ENCODE measurements at regions of chr17 and their contacts with region 1.

Region 1: DNA sequence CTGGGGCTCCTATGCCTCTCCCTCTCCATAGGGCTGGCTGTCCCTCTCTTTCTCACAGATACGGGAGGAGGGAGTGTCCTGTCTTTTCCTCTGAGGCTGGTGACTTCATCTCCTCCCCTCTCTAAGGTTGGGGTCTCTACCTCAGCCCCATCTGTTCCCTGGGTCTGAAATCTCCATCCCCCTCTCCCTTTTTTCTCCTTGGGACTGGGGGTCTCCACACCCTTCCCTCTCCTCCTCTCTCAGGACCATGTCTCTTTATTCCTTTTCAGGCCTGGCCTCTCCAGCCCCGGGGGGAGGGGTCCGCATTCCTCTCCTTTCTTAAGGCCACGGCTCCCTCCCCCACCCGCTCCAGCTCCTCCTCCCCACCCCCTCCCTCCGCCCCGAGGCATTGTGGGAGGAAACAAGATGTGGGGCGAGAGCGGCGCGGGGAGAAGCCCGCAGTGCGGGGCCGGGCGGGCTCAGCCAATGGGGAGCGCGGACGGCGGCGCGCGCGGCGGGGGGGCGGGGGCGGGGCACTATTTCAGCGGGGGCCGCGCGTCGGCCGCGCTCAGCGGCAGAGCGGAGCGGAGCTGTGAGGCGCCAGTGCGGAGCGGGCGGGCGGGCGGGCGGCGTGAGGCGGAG is at the start of gene DYNLL2:
- DNase-seq: peak; percentile 86 to 89 (median 88)
- H3K4me3 ChIP-seq: peak within 1 kb of the TSS; percentile 79 to 85
- H3K4me3 Mint-ChIP-seq: peak within 1 kb of the TSS; percentile 91 to 95 (median 94)
- H3K27ac ChIP-seq: peak within 1 kb of the TSS; percentile 80
- H3K27ac Mint-ChIP-seq: peak within 1 kb of the TSS; percentile 91 to 95 (median 93)
- H3K4me1 ChIP-seq: peaks cover 40% of the 10 kb centered on the region
- H3K4me1 Mint-ChIP-seq: peaks cover 20 to 41% (median 35%) of the 10 kb centered on the region in 4 donors
- H3K27me3 ChIP-seq: no peaks in the 10 kb centered on the region
- H3K27me3 Mint-ChIP-seq: peaks cover 0 to 10% of the 10 kb centered on the region in 2 donors
- total RNA-seq, gene DYNLL2: 45.6 to 45.8 TPM

Region 2: DNA sequence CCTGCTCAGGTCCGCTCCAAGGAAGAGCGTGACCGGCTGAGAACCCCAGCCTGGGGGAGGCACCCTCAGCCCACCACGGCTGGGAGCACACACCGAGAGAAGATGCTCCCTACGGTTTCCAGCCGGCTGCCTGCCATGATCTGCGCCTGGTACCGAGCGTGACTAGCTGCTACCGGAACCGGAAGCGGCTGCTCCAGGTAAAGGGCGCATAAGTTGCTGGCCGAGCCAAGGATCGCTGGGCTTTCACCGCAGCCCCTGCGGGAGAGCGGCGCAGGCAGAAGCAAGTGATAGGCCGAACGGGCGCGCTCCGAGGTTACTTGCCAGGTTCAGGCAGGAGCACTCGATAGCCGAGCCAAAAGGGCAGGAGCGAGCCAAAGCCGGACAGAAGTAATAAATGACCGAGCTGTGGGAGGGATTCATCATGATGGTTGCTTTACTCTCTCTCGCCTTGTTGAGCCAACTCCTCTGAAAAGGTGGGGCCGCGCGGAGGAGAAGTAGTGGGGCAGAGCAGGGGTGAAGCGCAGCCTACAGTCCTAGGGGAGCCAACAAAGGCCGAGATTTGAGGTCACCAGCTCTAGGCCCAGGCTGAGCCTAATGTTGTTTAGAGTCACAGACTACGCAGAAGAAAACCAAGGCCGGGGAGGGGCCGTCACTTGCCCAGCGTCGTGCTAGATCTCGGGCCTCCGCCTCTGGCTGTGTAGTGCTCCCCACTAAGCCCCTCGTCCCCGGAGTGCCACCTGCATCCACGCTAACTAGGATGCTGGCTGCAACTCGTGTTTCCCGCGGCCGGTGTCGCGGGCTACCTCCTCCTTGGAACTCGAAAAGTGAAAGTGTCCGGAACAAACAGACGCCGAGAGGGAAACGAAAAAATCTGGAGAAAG is 232.9 kb before region 1 on chr17 and contains the start of gene MRPS23:
- CTCF ChIA-PET with region 1: no interaction called
- POLR2A ChIA-PET with region 1: interaction called, 12 read pairs
- intact Hi-C with region 1: loop called (anchors 1 kb)
- DNase-seq: peak; percentile 94 to 99 (median 97)
- H3K4me3 ChIP-seq: peak within 1 kb of the TSS; percentile 75 to 87
- H3K4me3 Mint-ChIP-seq: peak within 1 kb of the TSS; percentile 96 to 99 (median 98)
- H3K27ac ChIP-seq: peak within 1 kb of the TSS; percentile 92
- H3K27ac Mint-ChIP-seq: peak within 1 kb of the TSS; percentile 98 to 100 (median 99)
- H3K4me1 ChIP-seq: peaks cover 32% of the 10 kb centered on the region
- H3K4me1 Mint-ChIP-seq: peaks cover 27 to 57% (median 35%) of the 10 kb centered on the region in 4 donors
- H3K27me3 ChIP-seq: no peaks in the 10 kb centered on the region
- H3K27me3 Mint-ChIP-seq: no peaks in the 10 kb centered on the region
- total RNA-seq, gene MRPS23: 28.7 to 29.5 TPM

Region 3: GRCh38 chr17:57892146-57892828 is 190.7 kb before region 1 on chr17:
- CTCF ChIA-PET with region 1: no interaction called
- POLR2A ChIA-PET with region 1: no interaction called
- intact Hi-C with region 1: loop called (anchors 10 kb)
- DNase-seq: peak; percentile 62 to 72 (median 66)
- H3K4me3 ChIP-seq: no peak overlapping the region
- H3K4me3 Mint-ChIP-seq: no peak overlapping the region
- H3K27ac ChIP-seq: no peak overlapping the region
- H3K27ac Mint-ChIP-seq: no peak overlapping the region
- H3K4me1 ChIP-seq: no peaks in the 10 kb centered on the region
- H3K4me1 Mint-ChIP-seq: peaks cover 2 to 7% (median 5%) of the 10 kb centered on the region in 4 donors
- H3K27me3 ChIP-seq: no peaks in the 10 kb centered on the region
- H3K27me3 Mint-ChIP-seq: peaks cover 0 to 6% of the 10 kb centered on the region in 2 donors

Region 4: GRCh38 chr17:57975044-57975443 is 107.9 kb before region 1 on chr17:
- CTCF ChIA-PET with region 1: no interaction called
- POLR2A ChIA-PET with region 1: no interaction called
- intact Hi-C with region 1: no loop called
- DNase-seq: no peak
- H3K4me3 ChIP-seq: no peak overlapping the region
- H3K4me3 Mint-ChIP-seq: no peak overlapping the region
- H3K27ac ChIP-seq: no peak overlapping the region
- H3K27ac Mint-ChIP-seq: peak overlapping the region in 1 of 7 donors; percentile 30
- H3K4me1 ChIP-seq: no peaks in the 10 kb centered on the region
- H3K4me1 Mint-ChIP-seq: peaks cover 4 to 9% (median 6%) of the 10 kb centered on the region in 4 donors
- H3K27me3 ChIP-seq: no peaks in the 10 kb centered on the region
- H3K27me3 Mint-ChIP-seq: no peaks in the 10 kb centered on the region

Region 5: DNA sequence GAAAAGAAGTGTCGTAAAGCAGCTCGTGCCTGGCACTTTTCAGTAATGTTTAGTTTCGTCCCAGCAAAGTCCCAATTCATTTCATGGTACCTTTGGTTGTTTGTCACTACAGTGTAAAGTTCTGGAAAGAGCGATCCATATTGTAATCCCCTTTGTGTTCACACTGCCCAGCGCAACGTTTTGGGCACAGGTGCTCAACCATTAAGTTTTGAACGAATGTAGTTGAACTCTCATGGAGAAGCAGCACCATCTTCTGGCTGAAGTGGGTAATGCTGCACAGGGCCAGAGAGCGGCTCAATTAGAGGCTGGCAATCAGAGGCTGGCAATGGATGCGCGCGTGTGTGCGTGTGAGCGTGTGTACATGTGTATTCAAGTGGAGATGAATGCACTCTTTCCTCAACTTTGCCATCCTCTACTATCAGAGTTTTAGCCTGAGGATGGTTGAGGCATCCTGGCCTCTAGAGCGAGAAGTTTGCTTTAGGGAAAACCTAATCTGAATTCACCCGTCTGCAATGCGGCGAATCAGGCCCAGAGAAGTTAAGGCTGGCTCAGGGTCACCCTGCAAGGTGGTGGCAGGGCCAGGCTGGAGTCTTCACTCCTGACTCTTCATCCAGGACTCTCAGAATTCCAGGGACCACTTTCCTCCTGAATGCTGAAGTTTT is 30.1 kb after region 1 on chr17:
- CTCF ChIA-PET with region 1: interaction called, 4 read pairs
- POLR2A ChIA-PET with region 1: no interaction called
- intact Hi-C with region 1: loop called (anchors 1 kb)
- DNase-seq: peak; percentile 77 to 81 (median 79)
- H3K4me3 ChIP-seq: no peak overlapping the region
- H3K4me3 Mint-ChIP-seq: no peak overlapping the region
- H3K27ac ChIP-seq: no peak overlapping the region
- H3K27ac Mint-ChIP-seq: peak overlapping the region in 2 of 7 donors; percentile 14 to 69
- H3K4me1 ChIP-seq: no peaks in the 10 kb centered on the region
- H3K4me1 Mint-ChIP-seq: peaks cover 0 to 4% (median 2%) of the 10 kb centered on the region in 4 donors
- H3K27me3 ChIP-seq: no peaks in the 10 kb centered on the region
- H3K27me3 Mint-ChIP-seq: peaks cover 3 to 8% of the 10 kb centered on the region in 2 donors

Region 6: GRCh38 chr17:58172369-58173071 is 89.5 kb after region 1 on chr17:
- CTCF ChIA-PET with region 1: no interaction called
- POLR2A ChIA-PET with region 1: no interaction called
- intact Hi-C with region 1: loop called (anchors 1 kb)
- DNase-seq: peak; percentile 62 to 72 (median 66)
- H3K4me3 ChIP-seq: no peak overlapping the region
- H3K4me3 Mint-ChIP-seq: peak overlapping the region; percentile 16 to 69 (median 51)
- H3K27ac ChIP-seq: no peak overlapping the region
- H3K27ac Mint-ChIP-seq: peak overlapping the region in 6 of 7 donors; percentile 15 to 92 (median 89)
- H3K4me1 ChIP-seq: peaks cover 47% of the 10 kb centered on the region
- H3K4me1 Mint-ChIP-seq: peaks cover 40 to 50% (median 44%) of the 10 kb centered on the region in 4 donors
- H3K27me3 ChIP-seq: no peaks in the 10 kb centered on the region
- H3K27me3 Mint-ChIP-seq: peaks cover under 1% of the 10 kb centered on the region in 2 donors

Region 7: DNA sequence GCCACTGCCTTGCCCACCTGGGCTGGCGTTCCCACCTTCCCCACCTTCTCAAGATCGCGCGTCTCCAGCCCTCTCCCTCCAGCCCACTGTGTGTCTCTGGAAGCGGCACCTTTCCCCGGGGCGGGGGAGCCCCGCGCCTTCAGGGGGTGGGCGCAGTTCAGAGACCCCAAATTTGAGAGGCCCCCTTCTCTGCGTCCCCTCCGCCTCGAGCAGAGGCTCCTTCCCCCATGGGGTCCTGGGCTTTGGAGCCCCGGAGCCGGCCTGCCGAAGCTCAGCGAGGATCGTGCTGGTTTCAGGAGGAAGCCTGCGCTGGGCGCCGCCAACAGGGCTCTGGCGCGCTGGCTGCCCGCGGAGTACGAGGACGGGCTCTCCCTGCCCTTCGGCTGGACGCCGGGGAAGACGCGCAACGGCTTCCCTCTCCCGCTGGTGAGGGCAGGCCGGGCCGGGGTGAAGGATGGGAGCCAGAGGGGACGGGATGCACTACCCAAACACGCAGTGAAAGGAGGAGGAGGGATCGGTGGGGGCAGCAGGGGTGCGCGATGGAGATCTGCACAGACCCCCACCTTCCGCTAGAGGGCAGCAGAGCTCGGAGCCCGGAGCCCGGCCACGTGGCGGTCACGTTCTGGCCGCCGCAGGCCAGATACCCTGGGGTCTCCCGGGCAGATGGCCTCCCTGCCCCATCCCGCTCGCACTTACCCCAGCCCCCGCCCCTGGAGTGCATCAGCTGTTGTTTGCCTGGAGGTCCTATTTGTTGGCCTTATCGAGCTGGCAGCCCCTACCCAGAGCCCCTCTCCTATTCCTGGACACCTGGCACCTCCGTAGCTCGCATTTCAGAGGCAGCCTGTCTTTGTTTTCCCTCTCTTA is 166.5 kb after region 1 on chr17:
- CTCF ChIA-PET with region 1: no interaction called
- POLR2A ChIA-PET with region 1: no interaction called
- intact Hi-C with region 1: no loop called
- DNase-seq: peak; percentile 69 to 80 (median 73)
- H3K4me3 ChIP-seq: peak overlapping the region in 1 of 2 donors; percentile 62
- H3K4me3 Mint-ChIP-seq: peak overlapping the region; percentile 70 to 86 (median 80)
- H3K27ac ChIP-seq: no peak overlapping the region
- H3K27ac Mint-ChIP-seq: peak overlapping the region in 2 of 7 donors; percentile 2 to 18
- H3K4me1 ChIP-seq: peaks cover 11% of the 10 kb centered on the region
- H3K4me1 Mint-ChIP-seq: peaks cover 3 to 9% (median 6%) of the 10 kb centered on the region in 4 donors
- H3K27me3 ChIP-seq: no peaks in the 10 kb centered on the region
- H3K27me3 Mint-ChIP-seq: peaks cover 1 to 5% of the 10 kb centered on the region in 2 donors